Pancreas (tissue), 10 donors: ENCODE measurements at regions of chr22 and their contacts with region 1.

Region 1: DNA sequence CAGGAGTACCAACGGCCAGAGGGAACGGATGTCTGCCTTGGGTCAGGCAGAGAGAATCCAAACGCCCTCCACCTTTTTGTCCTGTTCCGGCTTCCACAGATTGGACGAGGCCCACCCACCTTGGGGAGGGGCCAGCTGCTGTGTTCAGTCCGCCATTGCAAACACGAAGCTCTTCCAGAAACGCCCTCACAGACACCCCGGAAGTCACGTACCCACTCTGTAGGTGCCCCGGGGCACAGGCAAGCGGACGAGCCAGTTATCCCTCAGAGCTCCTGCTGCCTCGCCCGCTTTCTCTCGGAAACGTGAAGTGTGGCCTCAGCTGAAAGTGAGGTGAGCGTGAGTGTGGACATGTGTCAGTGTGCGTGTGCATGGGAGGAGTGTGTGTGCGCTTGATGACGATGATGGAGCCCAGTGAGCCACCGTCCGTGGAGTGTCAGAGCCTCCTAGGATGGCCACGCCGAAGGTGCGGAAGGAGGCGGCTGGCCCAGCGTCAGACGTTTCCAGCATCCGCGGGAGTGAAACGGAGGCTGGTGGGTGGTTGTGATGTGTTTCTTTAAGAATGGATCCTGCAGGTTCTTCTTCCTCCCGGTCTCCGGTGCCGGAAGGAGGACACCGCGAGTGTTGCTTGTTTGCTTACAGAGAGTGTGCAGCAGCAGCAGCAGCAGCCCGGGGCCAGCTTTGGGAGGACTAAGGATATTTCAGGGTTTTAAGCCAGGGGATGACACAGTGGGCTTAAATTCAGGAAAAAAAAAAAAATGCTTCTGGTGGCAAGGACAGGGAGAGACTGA is 869.3 kb downstream of the TBC1D22A start:
- DNase-seq: no peak
- ATAC-seq: no peak
- H3K4me3 ChIP-seq: no peak overlapping the region
- H3K27ac ChIP-seq: no peak overlapping the region
- H3K4me1 ChIP-seq: no peaks in the 10 kb centered on the region
- H3K27me3 ChIP-seq: peaks cover 0 to 3% (median 0%) of the 10 kb centered on the region in 4 donors
- CTCF ChIP-seq: no peak

Region 2: DNA sequence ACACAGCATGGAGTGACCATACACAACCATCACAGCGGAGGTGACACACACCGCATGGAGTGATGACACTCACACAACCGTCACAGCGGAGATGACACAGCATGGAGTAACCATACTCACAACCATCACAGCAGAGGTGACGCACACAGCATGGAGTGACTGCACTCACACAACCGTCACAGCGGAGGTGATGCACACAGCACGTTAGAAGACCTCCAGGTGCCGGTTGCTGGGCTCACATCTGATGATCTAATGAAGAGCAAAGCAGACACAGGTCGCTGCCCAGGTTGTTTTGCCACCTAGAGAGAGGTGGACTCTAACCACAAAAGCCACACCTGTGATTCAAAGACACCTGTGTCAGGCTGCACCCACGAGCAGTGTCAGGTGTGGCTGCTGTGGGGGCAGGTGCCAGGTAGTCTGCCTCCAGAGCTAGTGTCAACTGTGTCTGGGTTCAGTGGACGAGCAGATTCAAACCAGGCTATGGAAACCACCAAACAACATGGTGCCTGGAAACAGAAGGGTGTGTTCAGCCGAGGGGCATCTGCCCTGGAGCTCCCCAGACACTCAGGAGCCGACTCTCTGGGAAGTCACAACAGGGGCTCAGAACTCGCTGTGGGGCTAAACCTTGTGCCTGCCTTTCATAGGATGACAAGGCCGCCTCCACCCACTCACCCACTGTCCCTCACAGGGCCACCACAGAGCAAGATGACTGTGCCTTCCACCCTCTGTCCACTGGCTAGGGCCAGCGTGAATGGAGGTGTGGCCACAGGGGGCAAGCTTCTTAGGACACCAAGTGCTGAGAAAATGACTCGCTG is 261.1 kb before region 1 on chr22:
- intact Hi-C with region 1: no loop called
- DNase-seq: no peak
- ATAC-seq: no peak
- H3K4me3 ChIP-seq: no peak overlapping the region
- H3K27ac ChIP-seq: no peak overlapping the region
- H3K4me1 ChIP-seq: no peaks in the 10 kb centered on the region
- H3K27me3 ChIP-seq: no peaks in the 10 kb centered on the region
- CTCF ChIP-seq: no peak

Region 3: DNA sequence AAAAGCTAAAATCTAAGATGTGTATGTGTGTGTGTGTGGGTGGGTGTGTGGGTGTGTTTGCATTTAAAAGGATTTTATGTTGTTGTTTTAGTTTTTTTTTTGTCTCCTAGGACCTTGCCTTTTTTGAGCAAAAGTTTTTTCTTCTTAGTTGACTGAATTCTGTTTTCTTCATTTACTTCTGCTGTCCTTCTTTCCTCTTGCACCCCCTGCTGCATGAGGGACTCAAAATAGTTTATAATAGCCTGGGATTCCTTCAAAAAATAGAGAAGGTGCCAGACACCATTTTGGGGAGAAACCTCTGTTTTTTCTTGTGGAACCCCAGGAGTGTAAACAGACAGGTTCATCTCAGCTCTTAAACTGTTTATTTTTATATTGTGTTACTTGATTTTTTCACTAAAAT is 51.6 kb before region 1 on chr22:
- intact Hi-C with region 1: loop called in 1 of 3 experiments (anchors 5 kb)
- DNase-seq: no peak
- ATAC-seq: no peak
- H3K4me3 ChIP-seq: no peak overlapping the region
- H3K27ac ChIP-seq: no peak overlapping the region
- H3K4me1 ChIP-seq: no peaks in the 10 kb centered on the region
- H3K27me3 ChIP-seq: no peaks in the 10 kb centered on the region
- CTCF ChIP-seq: no peak